HAP-1 (cell line): ENCODE measurements at regions of chr2 and their contacts with region 1.

Region 1: GRCh38 chr2:151238527-151239487 is 22.9 kb downstream of the RBM43 start:
- DNase-seq: peak; percentile 63 to 70
- H3K4me3 ChIP-seq: no peak overlapping the region
- H3K4me1 ChIP-seq: no peaks in the 10 kb centered on the region; the same call in 1 of the 2 replicates
- H3K27me3 ChIP-seq: no peaks in the 10 kb centered on the region

Region 2: GRCh38 chr2:149597668-149598326 is 1641.0 kb before region 1 on chr2:
- in situ Hi-C with region 1: loop called (anchors 10 kb)
- DNase-seq: peak; percentile 53 to 61
- H3K4me3 ChIP-seq: no peak overlapping the region
- H3K4me1 ChIP-seq: peaks cover 24% of the 10 kb centered on the region
- H3K27me3 ChIP-seq: no peaks in the 10 kb centered on the region

Region 3: DNA sequence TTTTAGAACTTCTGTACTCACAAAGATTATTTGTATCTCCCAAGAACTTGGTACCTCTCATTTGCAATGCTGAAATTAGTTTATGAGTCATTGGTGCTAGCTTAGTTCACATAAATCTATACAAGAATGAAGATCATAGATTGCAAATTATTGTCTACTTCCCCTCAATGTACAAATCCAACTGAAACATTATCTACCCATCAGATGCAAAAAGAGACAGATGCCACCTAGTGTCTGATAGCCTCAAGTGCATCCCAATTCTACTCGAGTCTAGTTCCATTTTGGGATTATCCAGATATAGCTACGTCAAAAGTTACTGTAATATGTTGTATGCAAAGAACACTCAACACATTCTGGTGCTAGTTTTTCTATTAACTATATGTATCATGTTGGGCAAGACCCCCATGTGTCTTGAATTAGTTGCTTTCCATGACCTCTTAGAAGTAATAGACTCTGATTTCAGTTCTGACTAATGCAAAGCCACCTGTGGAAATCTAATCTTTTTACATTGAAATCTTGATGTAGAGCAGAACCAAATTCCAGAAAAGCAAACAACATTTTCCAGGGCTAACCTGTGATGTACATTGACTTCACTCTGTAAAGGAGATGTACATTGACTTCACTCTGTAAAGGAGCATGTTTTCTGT is 187.1 kb before region 1 on chr2:
- in situ Hi-C with region 1: loop called (anchors 25 kb)
- DNase-seq: peak; percentile 59 to 60
- H3K4me3 ChIP-seq: no peak overlapping the region
- H3K4me1 ChIP-seq: no peaks in the 10 kb centered on the region
- H3K27me3 ChIP-seq: no peaks in the 10 kb centered on the region